Colonic mucosa (tissue), 4 donors: ENCODE measurements at regions of chr1 and their contacts with region 1.

Region 1: GRCh38 chr1:174769961-174770549 is 229.7 kb upstream of the CACYBP start:
- DNase-seq: no peak
- H3K4me3 ChIP-seq: no peak overlapping the region
- H3K27ac ChIP-seq: no peak overlapping the region
- H3K4me1 ChIP-seq: no peaks in the 10 kb centered on the region
- H3K27me3 ChIP-seq: no peaks in the 10 kb centered on the region
- CTCF ChIP-seq: peak; percentile 76

Region 2: DNA sequence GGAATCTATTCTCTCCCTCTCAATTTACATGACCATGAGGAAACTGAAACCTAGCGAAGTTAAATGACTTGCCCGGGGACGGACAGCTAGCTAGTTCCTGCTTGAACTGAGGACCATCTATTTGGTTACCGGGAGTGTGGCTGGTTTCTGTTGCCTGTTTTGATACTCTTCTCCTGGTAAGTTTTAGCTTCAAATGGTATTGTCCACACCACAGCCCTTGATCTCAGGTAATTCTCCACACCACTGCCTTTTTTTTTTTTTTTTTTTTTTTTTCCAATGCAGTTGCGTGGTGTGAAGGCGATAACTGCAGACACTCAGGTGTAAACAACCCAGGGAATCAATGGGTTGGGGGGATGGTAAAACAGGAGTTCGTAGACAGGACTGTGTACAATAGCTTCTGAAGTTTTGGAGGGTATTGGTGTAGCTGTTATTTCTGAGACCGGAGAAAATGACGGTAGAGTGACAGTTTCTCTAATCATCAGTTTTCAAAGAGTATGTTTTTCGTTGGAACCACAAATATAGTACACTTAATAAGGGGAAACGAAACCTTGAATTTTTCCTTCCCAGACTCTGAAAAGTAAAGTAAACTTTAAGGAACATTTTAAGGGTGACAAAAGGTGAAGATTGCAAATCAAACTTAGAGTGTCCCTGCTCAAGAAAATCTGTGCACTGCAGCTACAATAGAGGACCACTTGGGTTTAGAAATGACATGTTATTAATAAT is 104.4 kb after region 1 on chr1:
- intact Hi-C with region 1: no loop called
- DNase-seq: peak; percentile 50
- H3K4me3 ChIP-seq: peak overlapping the region; percentile 16
- H3K27ac ChIP-seq: peak overlapping the region; percentile 77
- H3K4me1 ChIP-seq: no peaks in the 10 kb centered on the region
- H3K27me3 ChIP-seq: no peaks in the 10 kb centered on the region
- CTCF ChIP-seq: no peak

Region 3: GRCh38 chr1:174982971-174983689 is 213.1 kb after region 1 on chr1:
- intact Hi-C with region 1: loop called (anchors 5 kb)
- DNase-seq: peak; percentile 61
- H3K4me3 ChIP-seq: no peak overlapping the region
- H3K27ac ChIP-seq: no peak overlapping the region
- H3K4me1 ChIP-seq: no peaks in the 10 kb centered on the region
- H3K27me3 ChIP-seq: no peaks in the 10 kb centered on the region
- CTCF ChIP-seq: peak; percentile 43

Region 4: GRCh38 chr1:175129997-175130648 is 360.1 kb after region 1 on chr1:
- intact Hi-C with region 1: loop called (anchors 10 kb)
- DNase-seq: no peak
- H3K4me3 ChIP-seq: no peak overlapping the region
- H3K27ac ChIP-seq: no peak overlapping the region
- H3K4me1 ChIP-seq: no peaks in the 10 kb centered on the region
- H3K27me3 ChIP-seq: no peaks in the 10 kb centered on the region
- CTCF ChIP-seq: no peak